ENCODE measurements at regions of chr1 and their contacts with region 1.

Region 1: GRCh38 chr1:153510984-153511410 is 24.8 kb downstream of the S100A6 start:
- DNase-seq: peak; percentile 84 to 88
- ATAC-seq: peak; percentile 73 to 85
- H3K4me3 ChIP-seq: no peak overlapping the region
- H3K27ac ChIP-seq: peak overlapping the region; percentile 72 to 87
- H3K4me1 ChIP-seq: peaks cover 43% of the 10 kb centered on the region
- CTCF ChIP-seq: peak; percentile 94
- EP300 ChIP-seq: no peak
- POLR2A ChIP-seq: no peak
- RAD21 ChIP-seq: peak; percentile 99 to 100

Region 2: GRCh38 chr1:153306303-153307220 is 204.4 kb before region 1 on chr1:
- CTCF ChIA-PET with region 1: no interaction called
- POLR2A ChIA-PET with region 1: no interaction called
- DNase-seq: no peak
- ATAC-seq: no peak
- H3K4me3 ChIP-seq: no peak overlapping the region
- H3K27ac ChIP-seq: no peak overlapping the region
- H3K4me1 ChIP-seq: no peaks in the 10 kb centered on the region
- CTCF ChIP-seq: no peak
- EP300 ChIP-seq: no peak
- POLR2A ChIP-seq: no peak
- RAD21 ChIP-seq: no peak

Region 3: GRCh38 chr1:153352523-153352922 is 158.5 kb before region 1 on chr1:
- CTCF ChIA-PET with region 1: interaction called, 731 read pairs
- POLR2A ChIA-PET with region 1: no interaction called
- DNase-seq: peak; percentile 69 to 77
- ATAC-seq: peak; percentile 60 to 76; a peak in 5 of 6 replicates
- H3K4me3 ChIP-seq: no peak overlapping the region
- H3K27ac ChIP-seq: no peak overlapping the region
- H3K4me1 ChIP-seq: no peaks in the 10 kb centered on the region
- CTCF ChIP-seq: peak; percentile 94
- EP300 ChIP-seq: no peak
- POLR2A ChIP-seq: no peak
- RAD21 ChIP-seq: peak; percentile 90 to 92

Region 4: DNA sequence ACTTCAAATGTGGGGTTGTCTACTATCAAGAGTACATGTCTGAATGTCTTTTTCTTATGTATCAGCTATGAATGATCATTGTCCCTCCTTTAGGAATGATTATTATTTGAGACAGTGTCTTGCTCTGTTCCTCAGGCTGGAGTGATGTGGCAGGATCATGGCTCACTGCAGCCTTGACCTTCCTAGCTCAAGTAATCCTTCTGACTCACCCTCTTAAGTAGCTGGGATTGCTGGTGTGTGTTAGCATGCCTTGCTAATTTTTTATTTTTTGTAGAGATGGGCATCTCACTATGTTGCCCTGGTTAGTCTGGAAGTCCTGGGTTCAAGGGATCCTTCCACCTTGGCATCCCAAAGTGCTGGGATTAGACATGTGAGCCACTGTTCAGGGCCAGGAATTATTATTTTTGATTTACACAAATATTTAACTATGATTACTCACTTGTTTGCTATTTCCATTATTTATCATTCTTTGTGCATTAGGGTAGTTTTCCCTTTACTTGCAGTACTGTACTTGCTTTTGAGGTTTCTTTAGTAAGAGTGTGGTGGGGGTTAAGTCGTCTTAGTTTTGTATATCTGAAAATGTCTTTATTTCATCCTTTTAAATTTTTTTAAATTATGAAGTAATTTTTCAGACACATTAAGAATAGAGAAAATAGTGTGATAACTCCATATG is 63.4 kb before region 1 on chr1:
- CTCF ChIA-PET with region 1: no interaction called
- POLR2A ChIA-PET with region 1: no interaction called
- DNase-seq: peak in 1 of 2 experiments; percentile 12
- ATAC-seq: peak in 1 of 2 experiments; percentile 67; a peak in 3 of 6 replicates
- H3K4me3 ChIP-seq: no peak overlapping the region
- H3K27ac ChIP-seq: no peak overlapping the region
- H3K4me1 ChIP-seq: peaks cover 11% of the 10 kb centered on the region; the same call in 2 of the 3 replicates
- CTCF ChIP-seq: no peak
- EP300 ChIP-seq: no peak
- POLR2A ChIP-seq: no peak
- RAD21 ChIP-seq: no peak

Region 5: DNA sequence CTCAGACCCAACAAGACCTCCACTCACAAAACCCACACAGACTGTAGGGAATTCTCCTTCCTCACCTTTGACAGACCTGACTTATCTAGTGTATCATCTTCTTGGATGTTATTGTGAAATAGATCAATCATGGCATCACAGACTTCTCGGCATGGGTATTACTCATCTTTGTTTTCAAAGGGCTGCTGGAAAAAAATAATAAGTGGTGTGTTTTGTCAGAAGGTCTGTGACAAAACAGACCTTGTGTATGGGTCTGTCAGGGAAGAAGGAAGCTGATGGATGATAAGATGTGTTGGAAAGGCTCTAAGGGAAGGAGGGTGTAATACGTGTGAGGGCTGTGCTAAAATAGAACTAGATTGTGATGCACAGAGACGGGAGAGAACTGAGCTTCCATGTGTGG is 36.6 kb before region 1 on chr1:
- CTCF ChIA-PET with region 1: no interaction called
- POLR2A ChIA-PET with region 1: no interaction called
- DNase-seq: no peak
- ATAC-seq: peak; percentile 23 to 52; a peak in 2 of 6 replicates
- H3K4me3 ChIP-seq: no peak overlapping the region
- H3K27ac ChIP-seq: peak overlapping the region in 1 of 2 experiments; percentile 9; a peak in 1 of 6 replicates
- H3K4me1 ChIP-seq: peaks cover 9% of the 10 kb centered on the region
- CTCF ChIP-seq: no peak
- EP300 ChIP-seq: no peak
- POLR2A ChIP-seq: no peak
- RAD21 ChIP-seq: no peak

Region 6: GRCh38 chr1:153545067-153546055 is 34.4 kb after region 1 on chr1 and contains the start of gene S100A4:
- CTCF ChIA-PET with region 1: interaction called, 25 read pairs
- POLR2A ChIA-PET with region 1: interaction called, 3 read pairs
- DNase-seq: peak; percentile 94 to 97
- ATAC-seq: peak; percentile 70 to 79
- H3K4me3 ChIP-seq: peak within 1 kb of the TSS; percentile 62
- H3K27ac ChIP-seq: peak within 1 kb of the TSS; percentile 96 to 97
- H3K4me1 ChIP-seq: peaks cover 96% of the 10 kb centered on the region
- CTCF ChIP-seq: no peak
- EP300 ChIP-seq: no peak
- POLR2A ChIP-seq: peak; percentile 85
- RAD21 ChIP-seq: peak; percentile 12 to 24; a peak in 2 of 5 replicates
- polyA plus RNA-seq, gene S100A4: 590 and 814 TPM in 2 replicates

Region 7: DNA sequence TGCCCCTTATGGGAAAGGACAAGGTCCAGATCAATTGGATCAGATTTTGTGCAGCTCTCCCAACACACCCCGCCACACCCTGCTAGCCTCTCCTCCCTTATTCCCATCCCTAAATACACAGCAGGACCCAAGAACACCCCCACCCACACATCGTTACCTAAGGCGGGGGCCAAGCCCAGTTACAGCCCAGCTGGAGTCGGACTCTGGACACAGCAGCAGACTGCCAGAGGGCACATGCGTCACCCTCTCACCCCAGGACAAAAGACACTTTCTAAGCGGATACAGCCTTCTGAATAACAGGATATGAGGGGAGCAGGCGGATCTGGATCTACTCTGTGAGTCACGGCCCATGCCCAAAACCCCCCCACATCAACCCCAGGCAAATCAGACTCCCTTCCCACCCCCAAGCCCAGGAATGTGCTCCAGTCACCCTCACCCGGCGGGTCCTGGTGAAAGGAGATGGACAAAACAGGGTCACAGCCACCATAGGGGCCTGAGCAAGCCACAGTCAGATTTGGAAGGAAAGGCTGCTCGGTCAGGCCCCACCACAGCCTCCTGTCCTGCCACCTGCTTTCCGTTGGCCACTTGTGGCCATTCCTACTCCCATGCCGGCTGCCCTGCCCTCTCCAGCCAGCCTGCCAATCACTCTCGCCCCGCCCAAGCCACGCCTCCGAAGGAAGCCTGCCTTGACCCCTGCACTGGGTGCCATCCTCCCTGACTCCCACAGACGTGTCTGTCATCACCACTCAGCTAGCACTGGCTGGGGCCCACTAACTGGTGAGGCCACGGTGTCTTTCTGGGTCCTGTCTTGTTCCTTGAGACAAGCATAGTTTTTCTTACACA is 98.0 kb after region 1 on chr1:
- CTCF ChIA-PET with region 1: interaction called, 15 read pairs
- POLR2A ChIA-PET with region 1: no interaction called
- DNase-seq: peak; percentile 88 to 98
- ATAC-seq: peak; percentile 73 to 82
- H3K4me3 ChIP-seq: peak overlapping the region; percentile 45
- H3K27ac ChIP-seq: peak overlapping the region; percentile 91 to 96
- H3K4me1 ChIP-seq: peaks cover 44% of the 10 kb centered on the region
- CTCF ChIP-seq: no peak
- EP300 ChIP-seq: no peak; a peak in 1 of 5 replicates
- POLR2A ChIP-seq: peak; percentile 46; the same call in 1 of the 2 replicates
- RAD21 ChIP-seq: no peak; a peak in 1 of 5 replicates

Region 8: GRCh38 chr1:153626922-153627796 is 116.2 kb after region 1 on chr1 and contains the start of gene S100A13:
- CTCF ChIA-PET with region 1: interaction called, 42 read pairs
- POLR2A ChIA-PET with region 1: no interaction called
- DNase-seq: peak; percentile 85 to 91
- ATAC-seq: peak; percentile 80 to 87
- H3K4me3 ChIP-seq: peak within 1 kb of the TSS; percentile 57
- H3K27ac ChIP-seq: peak within 1 kb of the TSS; percentile 92
- H3K4me1 ChIP-seq: peaks cover 18% of the 10 kb centered on the region
- CTCF ChIP-seq: peak; percentile 73
- EP300 ChIP-seq: no peak
- POLR2A ChIP-seq: peak; percentile 75
- RAD21 ChIP-seq: peak; percentile 54 to 72
- polyA plus RNA-seq, gene S100A13: 98.9 and 113 TPM in 2 replicates

Region 9: DNA sequence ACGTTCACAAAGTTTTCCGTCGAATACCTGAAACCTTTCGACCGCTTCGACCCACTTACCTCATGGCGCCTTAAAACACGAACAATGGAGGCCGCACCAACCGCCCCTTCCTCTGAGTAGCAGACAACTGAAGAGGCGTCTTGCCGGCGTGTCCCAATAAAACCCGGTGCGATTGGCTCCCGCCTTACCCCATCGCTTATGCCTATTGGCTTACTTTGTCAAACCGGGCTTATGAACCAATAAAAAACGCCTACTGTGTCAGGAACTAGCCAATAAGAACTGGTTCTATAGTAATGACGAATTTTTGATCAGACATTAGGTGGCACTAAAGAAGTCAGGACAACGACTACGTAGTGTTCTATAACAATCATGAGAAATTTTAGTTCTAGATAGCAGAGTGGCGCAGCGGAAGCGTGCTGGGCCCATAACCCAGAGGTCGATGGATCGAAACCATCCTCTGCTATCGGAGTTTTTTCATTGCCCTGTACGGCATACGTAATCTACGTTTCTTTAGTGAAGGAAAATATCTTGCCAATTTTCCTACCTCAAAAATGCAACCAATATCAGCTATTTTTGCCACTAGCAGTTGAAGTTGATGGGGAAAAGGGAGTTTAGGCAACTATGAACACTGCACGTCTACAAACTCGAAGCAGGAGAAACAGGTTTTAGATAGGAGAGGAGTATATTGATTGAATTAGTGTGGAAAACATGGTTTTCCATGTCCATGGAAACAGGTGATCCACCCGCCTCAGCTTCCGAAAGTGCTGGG is 160.0 kb after region 1 on chr1 and contains the start of gene ILF2:
- CTCF ChIA-PET with region 1: interaction called, 11 read pairs
- POLR2A ChIA-PET with region 1: no interaction called
- DNase-seq: peak; percentile 100
- ATAC-seq: peak; percentile 94 to 98
- H3K4me3 ChIP-seq: peak within 1 kb of the TSS; percentile 78
- H3K27ac ChIP-seq: peak within 1 kb of the TSS; percentile 82 to 90
- H3K4me1 ChIP-seq: peaks cover 10% of the 10 kb centered on the region
- CTCF ChIP-seq: peak; percentile 49
- EP300 ChIP-seq: no peak
- POLR2A ChIP-seq: peak; percentile 84
- RAD21 ChIP-seq: no peak
- polyA plus RNA-seq, gene ILF2: 285 and 339 TPM in 2 replicates

Measured in A549 (cell line).